CD4-positive, alpha-beta memory T cell (primary cell): ENCODE measurements at regions of chr17 and their contacts with region 1.

Region 1: DNA sequence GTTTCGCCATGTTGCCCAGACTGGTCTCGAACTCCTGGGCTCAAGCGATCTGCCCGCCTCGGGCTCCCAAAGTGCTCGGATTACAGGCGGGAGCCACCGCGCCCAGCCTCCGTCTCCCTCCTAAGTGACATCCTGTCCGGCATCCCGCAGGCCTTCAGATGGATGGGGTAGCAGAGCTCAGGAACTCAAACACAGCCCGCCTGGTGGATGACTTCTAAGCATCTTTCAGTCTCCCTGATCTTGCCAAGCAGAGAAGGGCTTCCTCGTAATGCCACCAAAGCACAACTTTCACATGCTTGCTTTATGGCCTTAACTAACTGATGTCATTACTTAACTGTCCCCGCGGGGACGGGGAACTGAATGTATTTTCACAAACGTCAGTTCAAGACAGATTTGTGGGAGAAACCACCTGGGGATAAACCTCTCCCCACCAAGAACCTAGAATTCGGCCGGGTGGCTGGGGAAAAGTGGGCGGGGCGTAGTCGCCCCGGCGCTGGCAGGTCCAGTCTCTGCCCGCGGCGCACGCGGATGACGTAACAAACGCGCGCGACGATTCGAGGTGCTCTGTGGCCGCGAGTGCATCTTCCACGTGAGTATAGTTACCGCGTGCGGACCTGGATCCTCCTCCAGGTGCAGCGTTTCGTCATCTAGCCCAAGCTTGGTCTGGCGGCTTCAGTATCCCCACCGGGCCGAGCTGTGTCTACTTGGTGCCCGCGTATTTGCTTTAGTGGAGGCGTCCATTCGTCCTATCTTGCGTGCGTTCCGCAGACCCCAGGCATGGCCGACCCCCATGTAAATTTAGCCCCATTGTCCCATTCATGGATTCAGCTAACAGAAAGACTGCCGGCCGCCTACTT is at the start of gene PFAS:
- DNase-seq: peak; percentile 94 to 96 (median 94)
- H3K4me3 ChIP-seq: peak within 1 kb of the TSS; percentile 55 to 100
- H3K4me3 Mint-ChIP-seq: peak within 1 kb of the TSS; percentile 96 to 100 (median 98)
- H3K27ac ChIP-seq: peak within 1 kb of the TSS; percentile 98
- H3K27ac Mint-ChIP-seq: peak within 1 kb of the TSS; percentile 99 to 100 (median 100)
- H3K4me1 ChIP-seq: peaks cover 38% of the 10 kb centered on the region
- H3K4me1 Mint-ChIP-seq: peaks cover 33 to 68% (median 42%) of the 10 kb centered on the region in 4 donors
- H3K27me3 ChIP-seq: no peaks in the 10 kb centered on the region
- H3K27me3 Mint-ChIP-seq: peaks cover 0 to 7% of the 10 kb centered on the region in 2 donors
- total RNA-seq, gene PFAS: 23.0 to 29.1 TPM

Region 2: DNA sequence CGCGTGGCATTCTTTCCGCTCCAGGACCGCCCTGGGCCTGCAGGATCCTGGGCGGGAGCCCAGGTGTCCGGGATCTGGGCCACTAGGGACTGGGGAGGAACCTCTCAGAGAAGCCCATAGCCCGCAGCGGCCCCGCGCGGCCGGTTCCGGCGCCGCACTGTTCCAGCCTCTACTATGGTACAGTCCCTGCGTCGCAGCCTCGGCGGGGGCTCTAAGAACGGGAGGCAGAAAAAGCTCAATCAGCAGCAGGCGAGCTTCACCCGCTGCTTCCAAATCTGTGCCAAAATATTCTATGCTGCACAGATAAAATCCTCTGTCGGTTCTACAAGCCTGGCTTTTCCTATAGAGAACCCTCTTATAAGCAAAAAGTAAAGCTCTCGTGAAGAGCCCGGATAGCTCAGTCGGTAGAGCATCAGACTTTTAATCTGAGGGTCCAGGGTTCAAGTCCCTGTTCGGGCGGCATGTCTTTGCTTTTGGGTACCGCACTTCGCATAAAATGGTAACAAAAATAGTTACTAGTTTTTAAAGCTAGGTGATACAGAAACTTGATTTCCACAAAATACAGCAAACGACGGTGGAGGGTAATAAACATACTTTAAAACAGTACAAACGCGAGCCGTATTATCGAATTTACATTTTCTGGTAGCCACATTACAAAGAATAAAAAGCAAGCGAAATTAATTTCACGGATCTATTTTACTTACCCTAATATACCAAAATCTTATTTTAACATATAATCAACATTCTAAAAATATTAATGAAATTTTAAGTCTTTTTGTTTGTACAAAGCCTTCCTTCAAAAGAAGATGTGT is 130.0 kb before region 1 on chr17:
- CTCF ChIA-PET with region 1: interaction called, 21 read pairs
- POLR2A ChIA-PET with region 1: interaction called, 33 read pairs
- intact Hi-C with region 1: loop called (anchors 1 kb)
- DNase-seq: peak; percentile 87 to 91 (median 88)
- H3K4me3 ChIP-seq: peak overlapping the region; percentile 69 to 97
- H3K4me3 Mint-ChIP-seq: peak overlapping the region; percentile 91 to 97 (median 94)
- H3K27ac ChIP-seq: peak overlapping the region; percentile 56
- H3K27ac Mint-ChIP-seq: peak overlapping the region; percentile 95 to 100 (median 98)
- H3K4me1 ChIP-seq: peaks cover 52% of the 10 kb centered on the region
- H3K4me1 Mint-ChIP-seq: peaks cover 34 to 63% (median 48%) of the 10 kb centered on the region in 4 donors
- H3K27me3 ChIP-seq: peaks cover 42% of the 10 kb centered on the region
- H3K27me3 Mint-ChIP-seq: peaks cover 27 to 59% of the 10 kb centered on the region in 2 donors

Region 3: DNA sequence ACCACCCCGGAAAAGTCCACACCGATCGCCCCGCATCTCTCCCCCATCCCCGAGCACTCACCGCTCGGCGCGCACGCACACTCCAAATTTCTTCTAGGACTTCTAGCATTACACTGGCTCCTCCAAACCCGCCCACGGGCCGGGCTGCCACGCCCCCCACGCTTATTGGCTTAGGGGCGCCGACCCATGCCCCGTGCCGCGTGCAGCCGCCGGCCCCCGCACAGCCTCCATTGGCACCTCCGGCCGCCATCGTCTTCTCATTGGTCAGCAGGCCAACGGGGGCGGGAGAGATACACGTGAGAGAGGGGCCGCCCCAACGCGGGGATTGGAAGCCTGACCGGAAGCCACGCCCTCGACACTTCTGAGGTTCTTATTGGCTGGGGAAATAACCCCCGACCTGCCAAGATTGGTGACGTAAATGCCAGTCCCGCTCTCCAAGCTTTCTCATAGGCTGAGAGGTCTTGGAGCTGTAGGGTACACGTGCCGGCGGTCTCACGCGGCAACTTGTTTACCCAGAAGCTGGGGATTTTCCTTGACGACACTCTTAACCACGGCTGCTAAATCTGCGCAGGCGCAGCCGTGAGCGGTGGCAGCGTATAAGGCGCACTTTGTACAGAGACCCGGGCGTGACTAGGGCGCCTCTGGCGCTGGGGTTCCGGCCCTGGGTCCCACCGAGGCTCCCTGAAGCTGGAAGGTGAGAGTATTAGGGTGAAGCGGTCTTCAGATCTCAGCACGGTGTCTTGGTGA is 92.6 kb before region 1 on chr17:
- CTCF ChIA-PET with region 1: interaction called, 6 read pairs
- POLR2A ChIA-PET with region 1: interaction called, 70 read pairs
- intact Hi-C with region 1: loop called (anchors 5 kb)
- DNase-seq: peak; percentile 100
- H3K4me3 ChIP-seq: peak overlapping the region; percentile 90
- H3K4me3 Mint-ChIP-seq: no peak overlapping the region
- H3K27ac ChIP-seq: peak overlapping the region; percentile 100
- H3K27ac Mint-ChIP-seq: no peak overlapping the region
- H3K4me1 ChIP-seq: peaks cover 85% of the 10 kb centered on the region
- H3K4me1 Mint-ChIP-seq: peaks cover 38 to 71% (median 55%) of the 10 kb centered on the region in 4 donors
- H3K27me3 ChIP-seq: no peaks in the 10 kb centered on the region
- H3K27me3 Mint-ChIP-seq: no peaks in the 10 kb centered on the region

Region 4: DNA sequence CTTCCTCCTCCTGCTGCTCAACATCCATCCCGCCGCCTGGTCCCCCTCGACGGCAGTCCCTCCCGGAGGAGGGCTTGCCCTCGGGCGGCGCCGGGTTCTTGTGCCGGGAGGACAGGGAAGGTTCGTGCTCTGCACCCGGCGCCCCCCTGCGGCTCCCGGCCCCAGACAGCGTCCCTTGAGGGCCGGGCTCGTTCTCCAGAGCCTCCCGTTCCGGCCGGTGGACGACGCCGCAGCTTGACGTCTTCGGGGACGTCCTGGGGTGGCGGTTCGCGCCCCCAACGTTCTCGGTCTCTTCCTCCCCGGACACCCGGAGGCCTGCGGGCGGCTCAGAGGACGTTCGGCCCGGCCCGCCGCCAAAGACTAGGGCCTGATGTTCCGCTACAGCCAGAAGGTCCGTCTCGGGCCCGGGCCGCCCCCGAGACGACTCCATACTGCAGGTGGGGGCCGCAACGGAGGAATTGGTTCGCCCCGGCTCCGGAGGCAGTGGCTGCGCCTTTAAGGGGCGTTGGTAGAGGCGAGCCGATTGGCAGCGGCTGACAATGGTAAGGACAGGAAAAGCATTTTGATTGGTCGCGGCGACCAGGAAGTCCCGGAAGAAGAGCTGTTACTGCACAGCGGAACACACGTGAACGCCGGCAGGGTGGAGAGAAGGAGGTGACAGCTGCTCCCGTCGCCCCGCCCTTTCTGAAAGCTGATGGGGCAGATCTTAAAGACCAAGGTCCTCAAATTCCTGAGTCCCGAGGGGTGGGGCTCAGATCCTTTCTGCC is 59.1 kb before region 1 on chr17 and contains the start of gene BORCS6:
- CTCF ChIA-PET with region 1: interaction called, 9 read pairs
- POLR2A ChIA-PET with region 1: interaction called, 221 read pairs
- intact Hi-C with region 1: loop called (anchors 1 kb)
- DNase-seq: peak; percentile 93 to 98 (median 96)
- H3K4me3 ChIP-seq: peak within 1 kb of the TSS; percentile 76 to 100
- H3K4me3 Mint-ChIP-seq: peak within 1 kb of the TSS in 5 of 8 donors; percentile 13 to 92 (median 41)
- H3K27ac ChIP-seq: peak within 1 kb of the TSS; percentile 82
- H3K27ac Mint-ChIP-seq: peak within 1 kb of the TSS in 5 of 7 donors; percentile 78 to 94 (median 91)
- H3K4me1 ChIP-seq: peaks cover 44% of the 10 kb centered on the region
- H3K4me1 Mint-ChIP-seq: peaks cover 7 to 15% (median 13%) of the 10 kb centered on the region in 4 donors
- H3K27me3 ChIP-seq: no peaks in the 10 kb centered on the region
- H3K27me3 Mint-ChIP-seq: no peaks in the 10 kb centered on the region
- total RNA-seq, gene BORCS6: 19.2 to 19.4 TPM

Region 5: DNA sequence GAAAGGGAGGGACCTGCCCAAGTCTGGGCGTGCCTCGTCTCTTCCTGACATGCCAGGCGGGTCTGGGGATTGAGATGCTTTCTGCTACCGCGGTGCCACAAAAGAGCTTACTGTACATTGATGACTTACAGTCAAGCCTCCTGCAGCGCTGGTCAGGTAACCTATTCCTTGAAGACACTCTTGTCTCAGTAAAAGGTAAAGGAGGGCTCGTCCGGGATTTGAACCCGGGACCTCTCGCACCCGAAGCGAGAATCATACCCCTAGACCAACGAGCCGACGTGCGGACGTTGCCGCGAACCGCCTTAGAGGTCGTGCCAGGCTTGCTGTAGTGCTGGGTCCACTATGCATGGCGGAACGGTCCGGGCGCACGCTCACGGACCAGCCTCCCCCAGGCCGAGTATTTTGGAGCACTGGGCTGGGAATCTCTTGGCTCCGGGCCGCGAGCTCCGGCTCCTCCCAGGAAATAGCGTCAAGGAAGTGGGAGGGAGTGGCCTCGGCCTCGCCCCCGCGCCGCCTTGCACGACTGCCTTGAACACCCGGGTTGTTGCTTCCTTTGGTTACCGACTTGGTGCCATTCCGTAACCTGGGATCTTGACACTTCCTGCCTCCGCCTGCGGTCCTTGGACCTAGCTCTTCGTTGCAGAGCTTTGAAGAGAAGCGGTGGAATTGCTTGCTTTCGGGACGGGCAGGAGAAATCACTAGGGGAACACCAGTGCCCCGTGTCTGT is 26.2 kb before region 1 on chr17:
- CTCF ChIA-PET with region 1: interaction called, 67 read pairs
- POLR2A ChIA-PET with region 1: interaction called, 611 read pairs
- intact Hi-C with region 1: loop called (anchors 1 kb)
- DNase-seq: peak; percentile 88 to 91 (median 90)
- H3K4me3 ChIP-seq: peak overlapping the region; percentile 63 to 99
- H3K4me3 Mint-ChIP-seq: peak overlapping the region; percentile 93 to 98 (median 94)
- H3K27ac ChIP-seq: peak overlapping the region; percentile 89
- H3K27ac Mint-ChIP-seq: peak overlapping the region; percentile 97 to 100 (median 98)
- H3K4me1 ChIP-seq: peaks cover 51% of the 10 kb centered on the region
- H3K4me1 Mint-ChIP-seq: peaks cover 36 to 85% (median 69%) of the 10 kb centered on the region in 4 donors
- H3K27me3 ChIP-seq: no peaks in the 10 kb centered on the region
- H3K27me3 Mint-ChIP-seq: peaks cover 4 to 21% of the 10 kb centered on the region in 2 donors

Region 6: DNA sequence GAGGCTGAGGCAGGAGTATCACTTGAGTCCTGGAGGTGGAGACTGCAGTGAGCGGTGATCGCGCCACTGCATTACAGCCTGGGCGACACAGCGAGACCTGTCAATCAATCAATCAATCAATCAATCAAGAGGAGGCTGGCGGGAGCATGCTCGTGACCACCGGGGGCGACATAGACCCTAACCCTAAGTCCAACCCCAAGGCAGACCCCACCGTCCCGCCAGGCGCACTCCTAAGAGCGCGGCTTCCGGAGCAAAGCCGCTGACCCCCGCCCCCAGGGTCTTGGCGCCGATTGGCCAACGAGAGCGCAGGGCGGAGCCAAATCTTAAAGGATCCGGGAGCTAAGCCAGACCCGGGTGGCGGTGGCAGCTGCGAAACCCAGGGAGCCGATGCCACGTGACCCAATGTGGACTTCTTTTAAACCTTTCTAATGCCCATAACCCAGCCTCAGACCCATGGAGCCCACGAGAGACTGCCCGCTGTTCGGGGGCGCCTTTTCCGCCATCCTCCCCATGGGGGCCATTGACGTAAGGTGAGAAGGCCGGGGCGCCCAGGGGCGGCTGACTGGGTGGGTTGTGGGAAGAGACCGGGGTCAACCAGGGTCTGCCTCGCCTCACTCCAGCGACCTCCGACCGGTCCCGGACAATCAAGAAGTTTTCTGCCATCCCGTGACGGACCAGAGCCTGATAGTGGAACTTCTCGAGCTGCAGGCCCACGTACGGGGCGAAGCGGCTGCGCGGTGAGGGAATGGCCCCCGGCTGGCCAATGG is 39.5 kb after region 1 on chr17 and contains the start of gene RANGRF:
- CTCF ChIA-PET with region 1: interaction called, 116 read pairs
- POLR2A ChIA-PET with region 1: interaction called, 100 read pairs
- intact Hi-C with region 1: loop called (anchors 1 kb)
- DNase-seq: peak; percentile 70 to 83 (median 73)
- H3K4me3 ChIP-seq: peak within 1 kb of the TSS; percentile 88 to 98
- H3K4me3 Mint-ChIP-seq: peak within 1 kb of the TSS; percentile 93 to 98 (median 97)
- H3K27ac ChIP-seq: peak within 1 kb of the TSS; percentile 83
- H3K27ac Mint-ChIP-seq: peak within 1 kb of the TSS; percentile 94 to 98 (median 97)
- H3K4me1 ChIP-seq: peaks cover 49% of the 10 kb centered on the region
- H3K4me1 Mint-ChIP-seq: peaks cover 23 to 69% (median 44%) of the 10 kb centered on the region in 4 donors
- H3K27me3 ChIP-seq: no peaks in the 10 kb centered on the region
- H3K27me3 Mint-ChIP-seq: no peaks in the 10 kb centered on the region
- total RNA-seq, gene RANGRF: 39.7 to 42.8 TPM

Region 7: DNA sequence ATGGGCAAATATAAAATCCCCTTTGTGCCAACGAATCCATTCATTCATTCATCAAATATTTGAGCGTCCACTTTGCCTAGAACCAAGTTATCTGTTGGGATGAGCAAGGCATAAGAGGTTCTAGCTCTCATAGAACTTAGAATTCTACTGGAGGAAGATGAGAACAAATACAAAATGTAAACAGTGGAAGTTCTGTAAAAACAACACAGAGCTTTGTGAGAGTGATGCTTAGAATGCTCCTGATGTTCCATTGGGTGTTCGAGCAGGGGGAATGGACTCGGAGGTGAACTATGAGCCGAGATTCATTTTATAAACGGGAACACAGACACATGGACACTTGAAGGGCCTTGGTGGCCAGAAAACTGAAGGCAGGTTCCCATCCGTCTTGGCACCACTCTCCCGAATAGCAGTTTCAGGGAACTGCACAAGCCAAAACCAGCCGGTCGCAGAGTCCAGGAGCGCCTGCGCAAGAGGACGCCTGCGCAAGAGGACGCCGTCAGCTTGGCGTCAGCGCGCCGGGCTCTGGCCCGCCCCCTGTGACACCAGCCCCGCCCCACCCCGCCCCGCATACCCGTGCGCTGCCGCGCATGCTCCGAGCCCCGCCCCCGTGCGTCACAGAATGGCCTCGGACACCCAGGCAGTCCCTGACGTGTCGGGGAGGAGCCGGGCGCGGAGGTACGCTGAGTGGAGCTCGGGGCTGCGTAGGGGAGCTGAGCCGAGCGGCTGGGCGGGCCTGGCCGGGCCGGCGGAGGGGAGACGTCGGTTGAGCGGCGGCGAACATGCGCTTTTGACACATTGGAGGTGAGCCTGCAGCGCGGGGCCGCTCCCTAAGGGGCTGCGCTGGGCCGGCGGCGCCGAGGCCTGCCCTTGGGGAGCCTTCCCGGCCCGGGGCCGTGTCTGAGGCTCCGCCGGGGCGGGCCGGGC is 186.5 kb after region 1 on chr17 and contains the start of gene NDEL1:
- CTCF ChIA-PET with region 1: no interaction called
- POLR2A ChIA-PET with region 1: interaction called, 3 read pairs
- intact Hi-C with region 1: loop called (anchors 5 kb)
- DNase-seq: peak; percentile 98 to 99 (median 98)
- H3K4me3 ChIP-seq: peak within 1 kb of the TSS; percentile 87 to 95
- H3K4me3 Mint-ChIP-seq: peak within 1 kb of the TSS; percentile 94 to 99 (median 98)
- H3K27ac ChIP-seq: peak within 1 kb of the TSS; percentile 100
- H3K27ac Mint-ChIP-seq: peak within 1 kb of the TSS; percentile 96 to 100 (median 99)
- H3K4me1 ChIP-seq: peaks cover 40% of the 10 kb centered on the region
- H3K4me1 Mint-ChIP-seq: peaks cover 19 to 49% (median 31%) of the 10 kb centered on the region in 4 donors
- H3K27me3 ChIP-seq: no peaks in the 10 kb centered on the region
- H3K27me3 Mint-ChIP-seq: no peaks in the 10 kb centered on the region
- total RNA-seq, gene NDEL1: 115 to 120 TPM